Activated CD4-positive, alpha-beta T cell treated with anti-CD3 and anti-CD28 coated beads for 36 hours (primary cell): ENCODE measurements at regions of chrX and their contacts with region 1.

Region 1: DNA sequence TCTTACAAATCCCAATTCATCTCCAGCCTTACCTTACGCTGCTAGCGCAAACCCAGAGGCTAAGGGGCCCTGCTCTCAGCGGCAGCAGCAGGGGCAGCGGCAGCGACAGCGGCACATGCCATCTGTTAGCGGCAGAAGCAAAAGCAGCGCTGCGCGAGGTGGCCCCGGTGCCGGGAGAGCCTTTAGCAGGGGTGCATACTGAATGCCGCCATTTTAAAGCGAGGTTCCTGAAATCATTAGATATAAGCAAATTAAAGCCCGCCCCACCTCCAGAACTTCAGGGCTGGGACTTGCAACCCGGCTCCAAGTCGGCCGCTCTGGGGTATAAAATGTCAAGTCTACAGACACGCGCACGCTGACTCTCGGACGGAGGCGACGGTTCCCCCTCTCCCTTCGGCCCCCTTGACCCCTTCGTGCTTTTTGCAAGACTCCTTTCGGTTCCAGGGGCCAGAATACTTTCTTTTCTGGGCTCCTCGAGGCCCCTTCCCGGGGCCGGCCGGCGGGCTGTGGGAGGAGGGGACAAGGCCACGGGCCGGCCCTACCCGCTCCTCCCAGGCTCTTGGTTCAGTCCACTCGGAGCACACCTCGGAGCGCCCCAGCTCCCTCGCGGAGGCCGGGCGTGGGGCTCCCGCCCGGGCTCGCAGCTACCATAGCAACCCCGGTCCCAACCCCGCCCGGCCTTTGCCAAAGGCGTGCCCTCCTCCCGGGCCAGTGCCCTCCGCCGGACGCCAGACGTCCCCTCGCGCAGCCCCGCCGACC is at the start of gene MBNL3:
- DNase-seq: peak; percentile 76
- ATAC-seq: peak; percentile 67
- H3K4me3 Mint-ChIP-seq: peak within 1 kb of the TSS; percentile 86
- H3K27ac Mint-ChIP-seq: peak within 1 kb of the TSS; percentile 98
- H3K4me1 Mint-ChIP-seq: peaks cover 42% of the 10 kb centered on the region
- H3K27me3 Mint-ChIP-seq: no peaks in the 10 kb centered on the region
- total RNA-seq, gene MBNL3: 15.3 to 19.3 TPM

Region 2: DNA sequence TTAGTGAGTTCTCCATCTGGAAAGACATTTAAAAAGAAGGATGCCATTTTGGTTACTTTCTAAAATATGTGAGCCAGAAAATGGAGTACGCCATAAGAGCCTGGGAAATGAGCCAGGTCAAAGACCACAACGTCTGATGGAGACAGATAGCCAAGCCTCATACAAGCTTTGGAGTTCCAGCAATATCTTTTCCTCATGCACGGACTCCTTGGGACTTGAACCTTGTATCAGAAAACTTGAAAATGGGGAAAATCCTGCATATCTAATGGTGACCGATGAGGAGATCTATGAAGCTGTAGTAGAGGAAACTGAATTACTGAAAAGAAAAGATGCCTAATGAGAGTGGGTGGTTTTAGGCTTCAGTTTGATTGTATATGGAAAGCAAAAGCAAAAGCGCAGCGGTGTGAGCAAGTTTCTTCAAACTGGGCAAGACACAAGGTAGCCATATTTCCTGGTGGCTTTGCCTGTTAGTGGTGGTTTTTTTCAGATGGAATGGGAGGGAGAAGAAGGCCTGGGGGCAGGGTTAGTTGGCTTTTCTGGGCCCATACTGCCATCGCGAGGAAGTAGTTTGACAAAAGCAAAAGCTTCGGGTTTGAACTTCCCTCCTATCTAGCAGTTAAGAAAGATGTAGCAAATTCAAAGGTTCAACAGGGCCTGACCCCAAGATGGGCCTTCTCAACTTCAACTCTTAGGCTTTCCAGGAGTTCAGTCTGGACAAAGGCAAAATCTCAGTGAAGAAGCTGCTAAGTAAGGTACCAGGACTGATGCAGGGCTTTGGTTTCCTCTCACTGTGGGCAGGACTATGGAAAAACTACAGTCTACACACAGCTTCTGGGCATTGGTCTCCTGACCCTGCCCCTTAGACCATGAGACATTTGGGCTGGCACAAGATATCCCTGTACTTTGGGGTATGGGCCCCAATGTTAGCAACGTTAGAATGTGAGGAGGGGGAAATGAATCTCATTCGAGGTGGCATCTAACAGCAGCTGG is 675.9 kb before region 1 on chrX:
- CTCF ChIA-PET with region 1: no interaction called
- POLR2A ChIA-PET with region 1: no interaction called
- intact Hi-C with region 1: loop called in 1 of 2 experiments (anchors 5 kb)
- DNase-seq: peak; percentile 70
- ATAC-seq: peak; percentile 89
- H3K4me3 Mint-ChIP-seq: peak overlapping the region; percentile 67
- H3K27ac Mint-ChIP-seq: peak overlapping the region; percentile 86
- H3K4me1 Mint-ChIP-seq: peaks cover 29% of the 10 kb centered on the region
- H3K27me3 Mint-ChIP-seq: no peaks in the 10 kb centered on the region

Region 3: GRCh38 chrX:131830400-131831184 is 658.4 kb before region 1 on chrX:
- CTCF ChIA-PET with region 1: no interaction called
- POLR2A ChIA-PET with region 1: no interaction called
- intact Hi-C with region 1: loop called (anchors 5 kb)
- DNase-seq: peak; percentile 76
- ATAC-seq: peak; percentile 89
- H3K4me3 Mint-ChIP-seq: peak overlapping the region; percentile 80
- H3K27ac Mint-ChIP-seq: peak overlapping the region; percentile 86
- H3K4me1 Mint-ChIP-seq: peaks cover 25% of the 10 kb centered on the region
- H3K27me3 Mint-ChIP-seq: no peaks in the 10 kb centered on the region

Region 4: DNA sequence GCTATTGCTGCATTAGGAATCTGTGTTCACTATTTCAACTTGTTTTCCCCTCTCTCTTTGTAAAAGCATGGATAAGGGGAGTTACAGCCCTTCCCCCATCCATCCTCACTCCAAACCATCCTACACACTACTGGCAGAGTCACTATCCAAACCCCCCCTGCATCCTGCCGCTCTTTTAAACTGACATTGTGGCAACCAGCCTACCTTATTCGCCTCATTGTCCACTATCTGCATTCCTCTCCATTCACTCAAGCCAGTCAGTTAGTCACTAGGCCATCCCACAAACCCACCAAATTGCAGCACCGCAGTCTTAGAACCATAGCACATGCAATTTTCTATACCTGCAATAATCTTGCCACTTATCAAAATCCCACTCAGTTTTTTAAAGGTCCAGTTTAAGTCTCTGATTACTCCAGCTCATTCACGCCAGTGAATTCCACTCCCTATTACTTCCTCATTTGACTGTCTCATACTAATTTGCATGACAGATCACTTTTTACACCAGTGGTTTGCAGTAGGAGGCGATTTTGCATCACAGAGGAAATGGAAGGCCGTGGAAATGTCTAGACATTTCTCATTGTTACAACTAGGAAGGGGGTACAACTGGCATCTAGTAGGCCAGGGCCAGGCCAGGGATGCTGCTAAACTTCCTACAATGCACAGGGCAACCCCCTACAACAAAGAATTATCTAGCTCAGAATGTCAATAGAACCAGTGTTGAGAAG is 287.6 kb after region 1 on chrX:
- CTCF ChIA-PET with region 1: no interaction called
- POLR2A ChIA-PET with region 1: no interaction called
- intact Hi-C with region 1: loop called in 1 of 2 experiments (anchors 10 kb)
- DNase-seq: no peak
- ATAC-seq: no peak
- H3K4me3 Mint-ChIP-seq: no peak overlapping the region
- H3K27ac Mint-ChIP-seq: no peak overlapping the region
- H3K4me1 Mint-ChIP-seq: peaks cover 27% of the 10 kb centered on the region
- H3K27me3 Mint-ChIP-seq: no peaks in the 10 kb centered on the region